Left cardiac atrium (tissue), 4 donors: ENCODE measurements at regions of chr1 and their contacts with region 1.

Region 1: GRCh38 chr1:151346769-151347522 is at the start of gene RFX5:
- DNase-seq: peak; percentile 95
- ATAC-seq: peak; percentile 98
- total RNA-seq, gene RFX5: 23.1 to 23.8 TPM

Region 2: GRCh38 chr1:151198255-151199127 is 148.5 kb before region 1 on chr1 and contains the start of gene PIP5K1A:
- intact Hi-C with region 1: loop called in 1 of 2 experiments (anchors 10 kb)
- DNase-seq: peak; percentile 100
- ATAC-seq: peak; percentile 94 to 97
- total RNA-seq, gene PIP5K1A: 34.7 to 46.9 TPM

Region 3: GRCh38 chr1:151292207-151293030 is 54.5 kb before region 1 on chr1:
- intact Hi-C with region 1: no loop called
- DNase-seq: no peak
- ATAC-seq: no peak

Region 4: GRCh38 chr1:151399890-151400495 is 53.0 kb after region 1 on chr1:
- intact Hi-C with region 1: loop called in 1 of 2 experiments (anchors 5 kb)
- DNase-seq: no peak
- ATAC-seq: peak; percentile 22 to 31